ENCODE measurements at regions of chr16 and their contacts with region 1.

Region 1: DNA sequence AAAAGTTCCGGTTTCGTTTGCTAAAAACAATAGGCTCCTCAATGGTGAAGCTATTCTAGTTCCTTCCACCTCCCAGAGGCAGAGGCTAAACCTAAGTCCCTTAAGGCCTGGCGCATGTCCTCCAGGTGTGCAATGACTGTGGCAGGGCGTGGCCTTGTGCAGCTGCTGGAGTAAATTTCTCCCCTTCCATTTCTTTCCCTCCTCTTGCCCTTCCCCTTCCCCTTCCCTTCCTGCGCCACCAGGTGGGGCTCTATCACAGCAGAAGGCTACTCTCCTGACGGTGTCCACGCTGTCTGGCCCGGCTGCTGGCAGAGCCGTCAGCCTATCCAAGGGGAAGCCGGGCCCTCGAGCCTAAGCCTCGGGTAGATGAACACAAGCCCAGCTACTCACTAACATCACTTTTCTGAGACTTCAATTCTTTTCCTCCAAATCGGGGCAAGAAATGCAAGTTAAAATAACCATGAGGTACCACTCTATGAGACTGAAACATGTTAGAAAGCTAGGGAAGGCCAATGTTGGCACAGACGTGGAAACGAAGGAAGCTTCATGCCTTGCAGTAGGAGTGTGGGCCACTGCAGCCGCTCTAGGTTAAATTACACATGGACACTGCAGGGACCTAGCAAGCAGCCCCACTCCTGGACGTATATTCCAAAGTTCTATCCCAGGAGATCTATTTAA is 34.4 kb downstream of the C16orf78 start:
- DNase-seq: peak; percentile 83 to 88
- H3K4me3 ChIP-seq: no peak overlapping the region
- H3K27ac ChIP-seq: no peak overlapping the region
- H3K4me1 ChIP-seq: peaks cover 0 to 8% (median 4%) of the 10 kb centered on the region in 4 donors
- H3K27me3 ChIP-seq: peaks cover 0 to 11% of the 10 kb centered on the region in 2 donors
- CTCF ChIP-seq: peak; percentile 89 to 94

Region 2: DNA sequence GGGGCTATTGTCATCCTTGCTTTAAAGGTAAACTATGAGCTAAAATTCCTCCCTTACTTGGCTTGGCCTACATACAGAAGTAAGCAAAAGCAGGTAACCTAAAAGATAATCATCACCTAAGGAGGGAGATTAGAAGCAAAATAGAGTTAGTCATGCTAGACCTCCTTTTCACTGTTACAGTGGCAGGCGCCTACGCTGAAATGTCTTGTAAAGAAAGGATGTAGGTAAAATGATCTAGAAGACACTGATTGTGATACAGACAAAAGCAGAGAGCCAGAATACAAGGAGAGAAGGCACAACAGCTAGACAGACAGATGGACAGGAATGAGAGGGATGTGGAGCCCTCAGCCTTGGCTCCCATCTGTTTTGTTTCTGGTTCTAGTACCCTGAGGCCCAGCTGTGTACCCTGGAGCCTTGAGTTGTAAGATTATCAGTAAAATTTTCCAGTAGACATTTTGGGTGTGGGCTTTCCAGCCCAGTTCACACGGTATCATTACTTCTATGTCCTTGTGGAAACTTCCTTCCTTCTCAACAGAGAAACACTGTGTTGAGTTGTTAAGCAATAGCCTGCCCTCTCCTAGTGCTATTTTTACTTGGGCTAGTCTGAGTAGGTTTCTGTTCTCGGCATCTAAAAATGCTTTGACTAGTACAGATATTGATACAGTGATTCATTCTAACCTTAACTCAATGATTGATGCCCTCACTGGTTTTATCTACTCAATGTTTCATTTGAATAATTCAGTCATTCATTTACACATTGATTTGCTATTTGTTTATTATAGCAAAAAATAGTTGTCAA is 42.1 kb before region 1 on chr16:
- intact Hi-C with region 1: no loop called
- DNase-seq: no peak
- H3K4me3 ChIP-seq: no peak overlapping the region
- H3K27ac ChIP-seq: no peak overlapping the region
- H3K4me1 ChIP-seq: no peaks in the 10 kb centered on the region
- H3K27me3 ChIP-seq: peaks cover 0 to 5% of the 10 kb centered on the region in 2 donors
- CTCF ChIP-seq: no peak

Region 3: DNA sequence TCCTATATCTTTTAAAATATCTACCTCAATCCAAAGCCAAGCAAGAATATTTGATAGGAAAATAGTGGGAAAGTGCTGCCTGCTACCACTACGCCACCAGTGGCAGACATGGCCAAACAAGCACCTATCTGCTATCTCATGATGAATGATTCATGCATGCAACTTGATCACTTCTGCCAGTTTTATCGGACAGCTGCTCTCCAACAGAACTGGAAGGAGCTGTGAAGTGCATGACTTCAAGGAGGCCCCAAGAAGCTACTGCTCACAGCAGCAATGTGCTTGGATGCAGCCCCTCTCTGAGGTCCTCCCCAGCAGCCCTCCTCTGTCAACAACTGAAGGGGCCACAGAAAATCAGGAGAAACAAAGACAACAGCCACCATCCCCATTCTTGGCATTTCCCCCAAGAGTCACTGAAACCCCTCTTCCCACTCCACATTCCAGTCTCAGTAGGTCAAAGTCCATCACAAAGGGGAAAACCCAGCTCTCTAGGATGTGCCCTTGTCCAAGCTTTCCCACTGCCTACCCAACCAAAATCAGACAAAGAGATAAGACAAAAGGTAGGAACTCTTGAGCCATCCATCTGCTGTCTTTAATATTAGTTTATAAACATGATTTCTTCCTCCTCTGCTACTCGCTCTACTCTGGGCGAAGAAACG is 180.8 kb after region 1 on chr16:
- intact Hi-C with region 1: loop called (anchors 5 kb)
- DNase-seq: peak; percentile 13 to 27
- H3K4me3 ChIP-seq: no peak overlapping the region
- H3K27ac ChIP-seq: no peak overlapping the region
- H3K4me1 ChIP-seq: no peaks in the 10 kb centered on the region
- H3K27me3 ChIP-seq: peaks cover 0 to 3% of the 10 kb centered on the region in 2 donors
- CTCF ChIP-seq: no peak

Region 4: DNA sequence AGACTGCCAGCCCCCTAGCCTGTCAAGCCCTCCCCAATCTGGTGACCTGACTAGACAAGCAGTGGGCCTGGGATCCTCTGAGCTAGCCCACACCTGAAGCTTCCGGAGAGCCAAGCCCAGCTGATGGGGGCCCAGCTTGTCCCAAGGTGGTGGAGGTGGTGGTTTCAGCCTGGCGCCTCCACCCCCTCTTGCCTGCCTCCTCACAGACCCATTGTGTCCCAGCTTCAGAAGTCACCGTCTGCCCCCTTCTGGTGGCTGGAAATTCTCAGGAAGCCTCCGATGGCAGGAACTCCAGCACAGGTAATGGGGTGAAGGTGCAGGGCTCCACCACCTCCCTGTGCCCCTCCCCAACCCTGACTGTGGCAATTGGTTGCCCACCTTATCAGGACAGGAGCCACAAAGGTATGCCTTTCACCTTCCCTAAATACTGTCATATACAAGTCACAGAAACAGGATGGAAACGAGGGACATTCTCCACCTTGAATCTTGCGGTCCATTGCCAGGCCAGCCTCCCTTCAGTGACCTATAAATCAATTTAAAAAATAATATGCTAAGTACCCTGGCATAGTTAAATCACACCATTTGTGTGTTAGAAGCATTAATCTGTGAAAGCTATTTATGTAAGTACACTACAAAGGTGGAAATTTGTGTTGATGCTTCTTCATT is 513.9 kb after region 1 on chr16:
- intact Hi-C with region 1: loop called (anchors 2 kb)
- DNase-seq: peak; percentile 31 to 70
- H3K4me3 ChIP-seq: no peak overlapping the region
- H3K27ac ChIP-seq: no peak overlapping the region
- H3K4me1 ChIP-seq: no peaks in the 10 kb centered on the region
- H3K27me3 ChIP-seq: peaks cover 0 to 21% of the 10 kb centered on the region in 2 donors
- CTCF ChIP-seq: peak; percentile 37 to 56